ENCODE measurements at regions of chr13 and their contacts with region 1.

Region 1: DNA sequence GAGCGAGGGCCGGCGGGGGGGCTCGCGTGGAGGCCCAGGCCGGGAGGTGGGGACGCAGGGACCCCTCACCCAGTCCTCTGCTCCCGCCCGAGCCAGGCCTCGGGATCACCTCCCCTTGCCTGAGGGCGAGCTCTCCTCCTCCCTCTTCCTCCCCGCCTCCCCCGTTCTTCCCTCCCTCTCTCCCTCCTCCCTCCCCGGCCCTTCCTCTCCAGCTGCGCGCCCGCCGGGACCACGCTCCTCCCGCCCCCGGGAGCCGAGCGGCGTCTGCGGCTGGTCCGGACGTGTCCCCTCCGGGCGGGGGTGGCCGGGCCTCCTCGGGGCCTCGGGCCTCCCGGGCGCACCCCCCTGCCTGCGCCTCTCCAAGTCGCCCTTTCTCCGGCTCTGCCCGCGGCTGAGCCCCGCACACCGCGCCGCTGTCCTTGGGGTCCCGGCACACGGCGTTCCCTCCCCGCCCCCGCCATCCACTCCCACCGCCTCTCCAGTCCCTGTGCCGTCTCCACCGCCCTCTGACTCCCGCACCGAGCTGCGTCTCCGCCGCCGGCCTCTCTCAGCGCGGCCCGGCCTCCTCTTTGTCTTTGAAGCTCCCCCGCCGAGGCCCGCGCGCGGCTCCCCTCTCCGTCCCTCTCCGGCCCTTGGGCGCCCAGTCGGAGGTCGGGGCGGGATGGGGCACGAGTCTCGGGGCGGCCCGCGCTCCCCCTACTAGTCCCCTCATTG is 5.7 kb downstream of the SOX1 start:
- DNase-seq: no peak
- H3K4me3 Mint-ChIP-seq: no peak overlapping the region
- H3K27ac Mint-ChIP-seq: no peak overlapping the region
- H3K4me1 Mint-ChIP-seq: peaks cover 5% of the 10 kb centered on the region
- H3K27me3 Mint-ChIP-seq: peaks cover 68% of the 10 kb centered on the region

Region 2: DNA sequence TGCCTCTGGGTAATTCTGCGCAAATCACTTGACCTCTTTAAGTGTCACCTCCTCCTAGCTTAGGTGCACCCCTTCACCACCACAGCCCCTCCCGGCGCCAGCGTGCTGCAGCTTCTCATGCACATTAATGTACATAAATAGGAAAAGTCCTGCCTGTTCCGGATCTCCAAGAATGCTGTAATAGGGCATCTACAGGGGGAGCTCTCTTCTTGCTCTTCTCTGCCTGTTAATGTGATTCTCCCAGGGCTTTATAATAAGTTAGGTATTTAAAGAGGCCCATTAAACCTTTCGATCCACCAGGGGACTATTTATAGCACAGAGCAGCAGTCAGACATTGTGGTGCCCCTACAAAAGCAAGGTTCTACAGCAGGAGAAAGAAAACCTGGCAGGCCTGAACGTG is 29.6 kb after region 1 on chr13:
- intact Hi-C with region 1: loop called (anchors 2 kb)
- DNase-seq: no peak
- H3K4me3 Mint-ChIP-seq: no peak overlapping the region
- H3K27ac Mint-ChIP-seq: no peak overlapping the region
- H3K4me1 Mint-ChIP-seq: no peaks in the 10 kb centered on the region
- H3K27me3 Mint-ChIP-seq: peaks cover 33% of the 10 kb centered on the region